Dendritic cell treated with granulocyte-macrophage colony-stimulating factor and Interleukin-4, amounts not matched to agents 40 ng/mL and 50 ng/mL, for 4 days (primary cell): ENCODE measurements at regions of chr1 and their contacts with region 1.

Region 1: GRCh38 chr1:104780470-104781078 is 1030.9 kb downstream of the AMY1C start:
- H3K4me3 Mint-ChIP-seq: no peak overlapping the region
- H3K27ac Mint-ChIP-seq: no peak overlapping the region
- H3K4me1 Mint-ChIP-seq: no peaks in the 10 kb centered on the region
- H3K27me3 Mint-ChIP-seq: no peaks in the 10 kb centered on the region

Region 2: GRCh38 chr1:104699433-104699832 is 81.1 kb before region 1 on chr1:
- intact Hi-C with region 1: no loop called
- H3K4me3 Mint-ChIP-seq: no peak overlapping the region
- H3K27ac Mint-ChIP-seq: no peak overlapping the region
- H3K4me1 Mint-ChIP-seq: no peaks in the 10 kb centered on the region
- H3K27me3 Mint-ChIP-seq: no peaks in the 10 kb centered on the region

Region 3: DNA sequence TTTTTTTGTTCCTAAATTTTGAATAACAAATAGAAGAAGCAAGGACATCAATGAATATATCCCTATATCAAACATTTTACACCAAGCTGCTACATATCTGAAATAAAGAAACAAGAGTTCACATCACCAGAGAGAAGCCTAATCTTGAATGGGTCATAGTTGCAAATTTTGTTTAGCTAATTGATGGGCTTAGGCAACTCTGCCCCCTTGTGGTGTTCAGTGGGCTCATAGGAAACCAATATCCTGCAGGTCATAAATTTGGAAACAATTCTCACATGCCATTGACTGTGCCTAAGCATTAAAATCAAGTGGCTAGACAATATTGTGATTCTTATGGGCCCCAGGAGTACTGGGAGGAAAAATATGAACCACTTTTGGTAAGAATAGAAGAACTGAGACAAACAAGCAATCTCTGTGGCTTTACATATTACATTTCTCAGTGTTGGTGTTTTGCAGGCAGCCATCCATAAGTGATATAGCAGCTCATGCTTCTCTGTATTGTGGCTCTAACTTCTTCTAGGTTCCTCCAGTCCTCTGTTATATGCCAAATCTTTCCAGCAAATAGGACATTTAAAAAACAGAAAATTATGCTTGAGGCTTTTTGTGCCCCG is 1013.1 kb after region 1 on chr1:
- intact Hi-C with region 1: loop called (anchors 5 kb)
- H3K4me3 Mint-ChIP-seq: no peak overlapping the region
- H3K27ac Mint-ChIP-seq: no peak overlapping the region
- H3K4me1 Mint-ChIP-seq: no peaks in the 10 kb centered on the region
- H3K27me3 Mint-ChIP-seq: no peaks in the 10 kb centered on the region